Activated T-helper 1 cell treated with anti-CD3 and anti-CD28 coated beads, Interleukin-12 subunit alpha, Interleukin-12 subunit beta, Interleukin-2, Interleukin-4 antibody, amounts not matched to agents 30 ng/mL and 10 ng/mL and 1 ng/mL, durations not matched to agents 14 hours and 24 hours and 36 hours (primary cell): ENCODE measurements at regions of chr11 and their contacts with region 1.

Region 1: GRCh38 chr11:47373876-47374720 is 4.2 kb downstream of the SPI1 start:
- DNase-seq: peak; percentile 69
- H3K4me3 Mint-ChIP-seq: no peak overlapping the region
- H3K27ac Mint-ChIP-seq: no peak overlapping the region
- H3K4me1 Mint-ChIP-seq: peaks cover 9% of the 10 kb centered on the region
- H3K27me3 Mint-ChIP-seq: peaks cover 3% of the 10 kb centered on the region

Region 2: DNA sequence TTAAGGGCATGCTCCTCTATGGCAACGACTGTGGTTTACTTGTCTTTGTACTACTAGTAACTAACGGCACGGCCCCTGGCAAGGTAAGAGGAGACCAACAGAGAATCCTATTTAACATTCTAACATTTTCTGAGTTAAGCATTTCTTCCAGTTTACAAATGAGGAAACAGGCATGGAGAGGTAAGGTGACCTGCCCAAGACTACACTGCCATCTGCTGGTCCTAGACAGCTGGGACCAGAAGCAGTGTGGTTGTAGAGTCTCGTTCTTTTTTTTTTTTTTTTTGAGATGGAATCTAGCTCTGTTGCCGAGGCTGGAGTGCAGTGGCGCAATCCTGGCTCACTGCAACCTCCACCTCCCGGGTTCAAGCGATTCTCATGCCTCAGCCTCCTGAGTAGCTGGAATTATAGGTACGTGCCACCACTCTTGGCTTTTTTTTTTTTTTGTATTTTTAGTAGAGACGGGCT is 80.1 kb after region 1 on chr11:
- intact Hi-C with region 1: loop called (anchors 1 kb)
- DNase-seq: peak; percentile 57
- H3K4me3 Mint-ChIP-seq: no peak overlapping the region
- H3K27ac Mint-ChIP-seq: no peak overlapping the region
- H3K4me1 Mint-ChIP-seq: peaks cover 4% of the 10 kb centered on the region
- H3K27me3 Mint-ChIP-seq: no peaks in the 10 kb centered on the region